ENCODE measurements at regions of chr7 and their contacts with region 1.

Region 1: DNA sequence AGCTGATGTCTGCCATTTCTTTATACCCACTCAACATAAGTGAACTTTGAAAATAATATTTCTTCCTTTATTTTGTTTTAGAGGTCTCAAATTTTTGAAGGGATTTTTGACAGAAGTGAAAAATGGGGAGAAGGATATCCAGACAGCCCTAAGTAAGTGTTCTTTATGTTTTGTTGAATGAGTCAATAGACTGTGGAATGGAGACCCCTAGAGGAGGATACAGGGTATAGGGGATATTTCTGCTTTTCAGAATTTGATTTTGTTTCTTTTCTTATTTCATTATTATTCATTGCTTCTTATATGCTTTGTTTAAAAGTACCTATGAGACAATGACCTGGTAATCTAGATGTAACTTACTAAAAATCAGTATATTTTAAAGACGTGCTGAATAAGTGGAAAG is 34.4 kb downstream of the PLEKHA8 start:
- DNase-seq: peak in 1 of 35 experiments; percentile 44
- ATAC-seq: peak in 3 of 4 experiments; percentile 40 to 63 (median 62)
- H3K4me3 ChIP-seq: no peak overlapping the region
- H3K4me3 Mint-ChIP-seq: no peak overlapping the region
- H3K27ac ChIP-seq: no peak overlapping the region
- H3K27ac Mint-ChIP-seq: no peak overlapping the region
- H3K4me1 ChIP-seq: no peaks in the 10 kb centered on the region
- H3K4me1 Mint-ChIP-seq: peaks cover 0 to 11% (median 5%) of the 10 kb centered on the region in 3 donors
- H3K27me3 ChIP-seq: no peaks in the 10 kb centered on the region
- H3K27me3 Mint-ChIP-seq: no peaks in the 10 kb centered on the region

Region 2: DNA sequence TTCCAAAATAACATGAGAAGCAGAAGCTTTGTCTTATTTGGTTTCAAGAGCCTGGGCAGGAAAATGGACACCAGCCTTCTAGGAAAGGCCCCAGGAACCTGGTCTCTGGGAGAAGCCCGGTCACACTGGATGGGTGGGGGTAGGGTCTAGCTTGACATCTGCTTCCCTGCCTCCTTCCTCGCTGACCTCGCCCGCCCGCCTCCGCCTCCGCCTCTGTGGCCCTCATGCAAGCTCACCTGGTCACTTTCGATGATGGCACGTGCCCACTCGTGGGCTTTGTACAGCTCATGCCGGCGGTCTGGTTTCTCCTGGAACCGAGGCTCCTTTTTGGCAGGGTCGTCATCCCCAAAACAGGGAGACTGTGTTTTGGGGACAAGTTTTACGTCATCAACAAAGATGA is 136.4 kb before region 1 on chr7:
- CTCF ChIA-PET with region 1: interaction called, 5 to 10 read pairs
- POLR2A ChIA-PET with region 1: no interaction called
- DNase-seq: no peak
- ATAC-seq: no peak
- H3K4me3 ChIP-seq: no peak overlapping the region
- H3K4me3 Mint-ChIP-seq: no peak overlapping the region
- H3K27ac ChIP-seq: no peak overlapping the region
- H3K27ac Mint-ChIP-seq: no peak overlapping the region
- H3K4me1 ChIP-seq: no peaks in the 10 kb centered on the region
- H3K4me1 Mint-ChIP-seq: no peaks in the 10 kb centered on the region
- H3K27me3 ChIP-seq: peaks cover 0 to 2% of the 10 kb centered on the region in 2 experiments
- H3K27me3 Mint-ChIP-seq: peaks cover 0 to 19% of the 10 kb centered on the region in 2 donors